ENCODE measurements at regions of chr3 and their contacts with region 1.

Region 1: GRCh38 chr3:50611464-50612233 is at the start of gene CISH:
- DNase-seq: peak; percentile 93
- H3K4me3 Mint-ChIP-seq: peak within 1 kb of the TSS; percentile 93
- H3K27ac Mint-ChIP-seq: peak within 1 kb of the TSS; percentile 42
- H3K4me1 Mint-ChIP-seq: peaks cover 40% of the 10 kb centered on the region
- H3K27me3 Mint-ChIP-seq: no peaks in the 10 kb centered on the region
- CTCF ChIP-seq: peak; percentile 37
- total RNA-seq, gene CISH: 0.26 and 0.59 TPM in 2 replicates

Region 2: DNA sequence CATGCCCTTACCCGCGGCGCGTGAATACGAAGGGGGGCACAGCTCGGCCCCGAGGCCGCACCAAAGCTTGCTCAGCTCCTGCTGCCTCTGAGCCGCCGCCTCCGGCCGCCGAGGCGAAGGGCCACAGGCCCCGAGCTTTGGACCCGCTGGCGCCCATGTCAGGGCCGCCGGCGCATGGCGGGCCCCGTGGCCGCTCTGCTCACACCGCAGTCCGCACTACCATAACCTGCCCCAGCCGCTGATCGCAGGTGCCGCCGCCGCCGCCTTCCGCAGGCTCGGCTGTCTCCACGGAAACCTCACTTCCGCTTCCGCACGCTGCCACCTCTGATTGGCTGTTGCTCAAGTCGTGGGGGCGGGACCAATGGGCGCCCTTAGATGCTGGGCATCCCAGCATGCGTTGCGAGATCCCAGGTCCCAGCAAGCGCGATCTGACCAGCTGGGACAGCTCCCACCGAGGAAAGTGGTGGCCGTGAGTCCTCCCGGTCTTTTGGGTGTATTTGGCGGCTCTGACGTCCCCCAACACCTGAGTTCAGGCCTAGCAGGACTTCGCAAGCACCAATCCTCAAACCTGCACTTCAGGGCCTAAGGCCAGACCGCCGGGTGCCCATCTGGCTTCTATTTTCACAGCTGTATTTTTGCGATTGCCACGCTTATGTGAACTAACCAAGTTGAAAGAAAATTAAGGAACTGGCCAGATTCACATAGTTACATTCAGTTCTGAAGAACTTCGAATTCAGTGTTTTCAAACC is 283.5 kb before region 1 on chr3 and contains the start of gene TUSC2:
- CTCF ChIA-PET with region 1: no interaction called
- POLR2A ChIA-PET with region 1: no interaction called
- intact Hi-C with region 1: no loop called
- DNase-seq: peak; percentile 97
- H3K4me3 Mint-ChIP-seq: peak within 1 kb of the TSS; percentile 86
- H3K27ac Mint-ChIP-seq: peak within 1 kb of the TSS; percentile 90
- H3K4me1 Mint-ChIP-seq: no peaks in the 10 kb centered on the region
- H3K27me3 Mint-ChIP-seq: no peaks in the 10 kb centered on the region
- CTCF ChIP-seq: no peak
- total RNA-seq, gene TUSC2: 14.5 and 20.4 TPM in 2 replicates

Region 3: GRCh38 chr3:50519471-50520089 is 92.1 kb before region 1 on chr3:
- CTCF ChIA-PET with region 1: interaction called, 13 read pairs
- POLR2A ChIA-PET with region 1: no interaction called
- intact Hi-C with region 1: loop called (anchors 1 kb)
- DNase-seq: peak; percentile 61
- H3K4me3 Mint-ChIP-seq: no peak overlapping the region
- H3K27ac Mint-ChIP-seq: no peak overlapping the region
- H3K4me1 Mint-ChIP-seq: no peaks in the 10 kb centered on the region
- H3K27me3 Mint-ChIP-seq: peaks cover 39% of the 10 kb centered on the region
- CTCF ChIP-seq: peak; percentile 86

Region 4: GRCh38 chr3:50587806-50588758 is 23.6 kb before region 1 on chr3:
- CTCF ChIA-PET with region 1: interaction called, 71 read pairs
- POLR2A ChIA-PET with region 1: interaction called, 3 read pairs
- intact Hi-C with region 1: no loop called
- DNase-seq: no peak
- H3K4me3 Mint-ChIP-seq: no peak overlapping the region
- H3K27ac Mint-ChIP-seq: no peak overlapping the region
- H3K4me1 Mint-ChIP-seq: peaks cover 18% of the 10 kb centered on the region
- H3K27me3 Mint-ChIP-seq: no peaks in the 10 kb centered on the region
- CTCF ChIP-seq: no peak

Region 5: GRCh38 chr3:50971487-50971924 is 359.9 kb after region 1 on chr3:
- CTCF ChIA-PET with region 1: interaction called, 5 read pairs
- POLR2A ChIA-PET with region 1: no interaction called
- intact Hi-C with region 1: loop called (anchors 2 kb)
- DNase-seq: peak; percentile 59
- H3K4me3 Mint-ChIP-seq: no peak overlapping the region
- H3K27ac Mint-ChIP-seq: no peak overlapping the region
- H3K4me1 Mint-ChIP-seq: no peaks in the 10 kb centered on the region
- H3K27me3 Mint-ChIP-seq: peaks cover 7% of the 10 kb centered on the region
- CTCF ChIP-seq: peak; percentile 73

Region 6: GRCh38 chr3:51358981-51359380 is 747.3 kb after region 1 on chr3:
- CTCF ChIA-PET with region 1: interaction called, 18 read pairs
- POLR2A ChIA-PET with region 1: no interaction called
- intact Hi-C with region 1: no loop called
- DNase-seq: no peak
- H3K4me3 Mint-ChIP-seq: no peak overlapping the region
- H3K27ac Mint-ChIP-seq: no peak overlapping the region
- H3K4me1 Mint-ChIP-seq: no peaks in the 10 kb centered on the region
- H3K27me3 Mint-ChIP-seq: no peaks in the 10 kb centered on the region
- CTCF ChIP-seq: no peak

Region 7: GRCh38 chr3:51391075-51391567 is 779.5 kb after region 1 on chr3 and contains the start of gene RBM15B:
- CTCF ChIA-PET with region 1: interaction called, 59 read pairs
- POLR2A ChIA-PET with region 1: interaction called, 28 read pairs
- intact Hi-C with region 1: loop called (anchors 1 kb)
- DNase-seq: peak; percentile 95
- H3K4me3 Mint-ChIP-seq: peak within 1 kb of the TSS; percentile 71
- H3K27ac Mint-ChIP-seq: peak within 1 kb of the TSS; percentile 67
- H3K4me1 Mint-ChIP-seq: peaks cover 32% of the 10 kb centered on the region
- H3K27me3 Mint-ChIP-seq: no peaks in the 10 kb centered on the region
- CTCF ChIP-seq: peak; percentile 61
- total RNA-seq, gene RBM15B: 32.5 and 33.6 TPM in 2 replicates

Measured in MCF 10A (cell line).